ENCODE measurements at regions of chr7 and their contacts with region 1.

Region 1: GRCh38 chr7:105652359-105652993 is 71.2 kb upstream of the EFCAB10 start:
- DNase-seq: peak; percentile 55
- H3K4me3 ChIP-seq: no peak overlapping the region
- H3K27ac ChIP-seq: no peak overlapping the region
- H3K27me3 ChIP-seq: no peaks in the 10 kb centered on the region
- CTCF ChIP-seq: peak; percentile 97

Region 2: DNA sequence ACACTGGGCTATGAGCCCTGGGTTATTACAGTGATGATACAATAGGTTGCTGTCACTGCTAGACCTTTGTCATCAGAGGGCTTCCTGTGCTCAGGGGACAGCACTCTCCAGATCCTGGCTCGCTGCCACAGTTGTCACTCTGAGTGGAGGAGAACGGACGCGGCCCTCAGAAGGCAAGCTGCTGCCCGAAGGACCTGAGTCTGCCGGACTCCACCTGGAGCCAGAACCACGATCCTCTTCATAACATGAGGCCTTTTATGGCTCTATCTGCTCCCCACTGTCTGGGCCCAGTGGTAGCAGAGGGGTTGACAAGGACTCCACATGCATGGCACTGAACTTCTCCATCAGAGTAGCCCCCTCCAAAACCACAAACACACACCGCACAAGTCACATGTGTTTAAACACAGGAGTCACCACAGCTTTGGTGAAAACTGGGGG is 23.5 kb after region 1 on chr7:
- CTCF ChIA-PET with region 1: interaction called, 11 read pairs
- POLR2A ChIA-PET with region 1: no interaction called
- DNase-seq: no peak
- H3K4me3 ChIP-seq: no peak overlapping the region
- H3K27ac ChIP-seq: no peak overlapping the region
- H3K27me3 ChIP-seq: no peaks in the 10 kb centered on the region
- CTCF ChIP-seq: no peak

Region 3: GRCh38 chr7:105940104-105940503 is 287.6 kb after region 1 on chr7:
- CTCF ChIA-PET with region 1: no interaction called
- POLR2A ChIA-PET with region 1: no interaction called
- DNase-seq: no peak
- H3K4me3 ChIP-seq: no peak overlapping the region
- H3K27ac ChIP-seq: no peak overlapping the region
- H3K27me3 ChIP-seq: peaks cover 8% of the 10 kb centered on the region
- CTCF ChIP-seq: no peak

Region 4: GRCh38 chr7:106166655-106167342 is 514.3 kb after region 1 on chr7:
- CTCF ChIA-PET with region 1: interaction called, 12 read pairs
- POLR2A ChIA-PET with region 1: no interaction called
- DNase-seq: peak; percentile 66
- H3K4me3 ChIP-seq: no peak overlapping the region
- H3K27ac ChIP-seq: no peak overlapping the region
- H3K27me3 ChIP-seq: peaks cover 13% of the 10 kb centered on the region
- CTCF ChIP-seq: peak; percentile 84